ENCODE measurements at regions of chr19 and their contacts with region 1.

Region 1: DNA sequence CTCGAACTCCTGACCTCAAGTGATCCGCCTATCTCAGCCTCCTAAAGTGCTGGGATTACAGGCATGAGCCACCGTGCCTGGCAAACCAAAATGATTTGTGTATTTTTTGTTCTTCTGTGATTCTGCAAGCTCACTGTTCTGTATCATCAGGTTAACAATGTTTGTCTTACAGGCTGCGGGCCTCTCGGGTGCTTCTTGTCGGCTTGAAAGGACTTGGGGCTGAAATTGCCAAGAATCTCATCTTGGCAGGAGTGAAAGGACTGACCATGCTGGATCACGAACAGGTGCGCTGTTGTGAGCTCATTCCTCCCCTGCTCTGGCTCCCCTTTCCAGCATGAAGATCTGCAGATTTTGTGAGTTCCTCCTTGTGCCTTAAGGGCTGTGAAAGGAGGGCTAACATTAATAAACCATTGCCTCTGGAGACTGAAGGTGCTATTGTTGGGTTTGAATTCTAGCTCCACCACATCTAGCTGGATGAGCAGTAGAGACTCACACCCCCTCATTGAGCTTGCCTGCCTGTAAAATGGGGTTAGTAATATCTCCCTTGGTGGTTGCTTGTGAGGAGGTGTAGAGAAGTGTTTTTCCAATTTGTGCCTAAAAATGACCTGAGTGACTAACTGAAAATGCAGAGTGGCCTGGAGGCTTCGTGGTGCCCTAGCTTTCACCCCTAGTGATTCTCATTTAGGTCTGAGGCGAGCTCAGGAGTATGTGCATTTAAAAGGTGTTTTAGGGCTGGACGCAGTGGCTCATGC is 12.9 kb downstream of the SAE1 start:
- DNase-seq: no peak
- ATAC-seq: no peak
- H3K4me3 ChIP-seq: no peak overlapping the region
- H3K4me3 Mint-ChIP-seq: no peak overlapping the region
- H3K27ac ChIP-seq: no peak overlapping the region
- H3K27ac Mint-ChIP-seq: no peak overlapping the region
- H3K4me1 ChIP-seq: peaks cover 42% of the 10 kb centered on the region
- H3K4me1 Mint-ChIP-seq: peaks cover 56% of the 10 kb centered on the region
- H3K27me3 ChIP-seq: no peaks in the 10 kb centered on the region
- H3K27me3 Mint-ChIP-seq: no peaks in the 10 kb centered on the region
- CTCF ChIP-seq: no peak

Region 2: GRCh38 chr19:47130591-47131227 is 12.8 kb before region 1 on chr19 and contains the start of gene SAE1:
- CTCF ChIA-PET with region 1: interaction called, 17 read pairs
- POLR2A ChIA-PET with region 1: interaction called, 12 read pairs
- intact Hi-C with region 1: loop called (anchors 2 kb)
- DNase-seq: peak; percentile 82 to 98 (median 92)
- ATAC-seq: peak; percentile 91
- H3K4me3 ChIP-seq: peak within 1 kb of the TSS; percentile 95
- H3K4me3 Mint-ChIP-seq: peak within 1 kb of the TSS; percentile 96
- H3K27ac ChIP-seq: peak within 1 kb of the TSS; percentile 68 to 74
- H3K27ac Mint-ChIP-seq: peak within 1 kb of the TSS; percentile 83
- H3K4me1 ChIP-seq: peaks cover 44% of the 10 kb centered on the region
- H3K4me1 Mint-ChIP-seq: peaks cover 52% of the 10 kb centered on the region
- H3K27me3 ChIP-seq: no peaks in the 10 kb centered on the region
- H3K27me3 Mint-ChIP-seq: no peaks in the 10 kb centered on the region
- CTCF ChIP-seq: peak; percentile 73
- total RNA-seq, gene SAE1: 29.6 to 30.9 TPM

Region 3: GRCh38 chr19:47176627-47177090 is 33.2 kb after region 1 on chr19:
- CTCF ChIA-PET with region 1: interaction called, 4 read pairs
- POLR2A ChIA-PET with region 1: interaction called, 11 read pairs
- intact Hi-C with region 1: loop called in 1 of 2 experiments (anchors 1 kb)
- DNase-seq: peak in 11 of 14 experiments; percentile 22 to 82 (median 43)
- ATAC-seq: peak; percentile 85
- H3K4me3 ChIP-seq: peak overlapping the region; percentile 6
- H3K4me3 Mint-ChIP-seq: peak overlapping the region; percentile 81
- H3K27ac ChIP-seq: peak overlapping the region; percentile 60 to 68
- H3K27ac Mint-ChIP-seq: peak overlapping the region; percentile 98
- H3K4me1 ChIP-seq: peaks cover 56% of the 10 kb centered on the region
- H3K4me1 Mint-ChIP-seq: peaks cover 69% of the 10 kb centered on the region
- H3K27me3 ChIP-seq: no peaks in the 10 kb centered on the region
- H3K27me3 Mint-ChIP-seq: no peaks in the 10 kb centered on the region
- CTCF ChIP-seq: no peak

Region 4: DNA sequence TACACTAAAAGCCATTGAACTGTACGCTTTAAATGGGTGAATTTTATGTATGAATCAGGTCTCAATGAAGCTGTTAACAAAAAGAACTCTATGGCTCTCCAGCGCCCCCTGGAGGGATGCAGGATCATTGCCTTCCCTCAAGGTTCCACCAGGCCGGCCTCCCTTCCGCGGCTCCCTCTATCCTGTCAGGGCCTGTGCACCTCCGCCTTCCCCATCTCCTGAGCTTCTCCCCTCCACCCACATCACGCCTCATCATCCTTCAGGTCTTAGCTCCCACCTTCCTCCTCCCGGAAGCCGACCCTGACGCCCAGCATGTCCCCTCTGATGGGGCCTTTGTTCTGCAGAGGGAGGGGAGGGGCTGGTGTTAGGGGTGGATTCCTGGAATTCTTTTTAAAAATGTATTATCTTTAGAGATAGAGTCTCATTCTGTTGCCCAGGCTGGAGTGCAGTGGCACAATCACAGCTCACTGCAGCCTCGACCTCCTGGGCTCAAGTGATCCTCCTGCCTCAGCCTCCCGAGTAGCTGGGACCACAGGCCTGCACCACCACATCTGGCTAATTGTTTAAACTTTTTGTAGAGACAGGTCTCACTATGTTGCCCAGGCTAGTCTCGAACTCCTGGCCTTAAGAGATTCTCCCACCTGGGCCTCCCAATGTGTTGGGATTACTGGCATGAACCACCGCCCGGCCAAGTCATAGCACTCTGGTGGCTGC is 248.2 kb after region 1 on chr19:
- CTCF ChIA-PET with region 1: interaction called, 3 read pairs
- POLR2A ChIA-PET with region 1: no interaction called
- intact Hi-C with region 1: loop called in 1 of 2 experiments (anchors 5 kb)
- DNase-seq: peak; percentile 63 to 88 (median 78)
- ATAC-seq: peak; percentile 90
- H3K4me3 ChIP-seq: no peak overlapping the region
- H3K4me3 Mint-ChIP-seq: no peak overlapping the region
- H3K27ac ChIP-seq: no peak overlapping the region
- H3K27ac Mint-ChIP-seq: no peak overlapping the region
- H3K4me1 ChIP-seq: peaks cover 7% of the 10 kb centered on the region
- H3K4me1 Mint-ChIP-seq: peaks cover 6% of the 10 kb centered on the region
- H3K27me3 ChIP-seq: peaks cover 0 to 2% of the 10 kb centered on the region in 2 experiments
- H3K27me3 Mint-ChIP-seq: peaks cover 19% of the 10 kb centered on the region
- CTCF ChIP-seq: peak; percentile 88